ENCODE measurements at regions of chr13 and their contacts with region 1.

Region 1: DNA sequence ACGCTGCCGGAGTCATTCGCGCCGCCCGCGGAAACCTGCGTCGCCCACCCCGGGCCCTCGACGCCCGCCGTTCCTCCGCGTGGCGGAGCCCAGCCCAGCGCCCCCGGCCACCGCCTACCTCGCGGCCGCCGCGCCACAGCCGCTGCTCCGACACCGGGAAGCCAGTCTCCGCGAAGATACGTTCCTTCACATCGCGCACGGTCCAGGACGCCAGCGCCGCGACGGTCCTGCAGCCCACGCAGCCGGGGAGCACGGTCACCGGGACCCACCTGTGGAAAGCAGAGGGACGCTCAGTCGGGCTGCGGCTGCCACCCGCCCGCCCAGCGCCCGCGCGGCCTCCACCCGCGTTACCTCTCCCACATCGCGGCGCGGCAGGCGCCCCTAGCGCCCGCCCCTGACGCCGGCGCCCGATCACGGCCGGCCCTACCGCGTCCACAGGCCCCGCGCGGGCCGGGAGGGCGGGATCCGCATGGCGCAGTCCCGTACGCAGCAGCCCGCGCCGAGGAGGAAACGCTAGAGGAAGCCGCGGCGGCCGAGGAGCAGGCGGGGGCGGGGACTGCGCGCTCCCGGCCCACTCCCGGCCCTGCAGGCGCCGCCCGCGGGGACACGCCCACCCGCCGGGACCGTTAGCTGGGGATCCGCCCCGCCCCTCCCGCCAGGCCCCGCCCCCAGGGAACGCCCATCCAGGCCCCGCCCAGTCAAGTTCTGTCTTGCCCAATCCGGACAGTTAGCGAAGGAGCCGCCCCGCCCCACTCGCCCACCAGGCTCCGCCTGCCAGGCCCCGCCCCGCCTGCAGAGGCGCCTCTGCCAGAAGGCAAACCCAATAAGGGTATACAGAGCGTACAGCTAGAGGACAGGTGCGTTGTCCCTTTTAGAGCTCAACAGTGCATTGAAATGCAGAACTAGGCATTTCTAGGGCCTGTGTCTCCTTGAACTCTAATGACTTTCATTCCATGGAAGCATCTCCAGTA is 58.2 kb downstream of the SACS start:
- DNase-seq: peak; percentile 91 to 96 (median 95)
- H3K4me3 ChIP-seq: peak overlapping the region in 1 of 2 donors; percentile 58
- H3K4me3 Mint-ChIP-seq: peak overlapping the region; percentile 65 to 86 (median 84)
- H3K27ac ChIP-seq: peak overlapping the region; percentile 69
- H3K27ac Mint-ChIP-seq: peak overlapping the region; percentile 67 to 95 (median 87)
- H3K4me1 ChIP-seq: peaks cover 64% of the 10 kb centered on the region
- H3K4me1 Mint-ChIP-seq: peaks cover 45 to 78% (median 68%) of the 10 kb centered on the region in 4 donors
- H3K27me3 ChIP-seq: no peaks in the 10 kb centered on the region
- H3K27me3 Mint-ChIP-seq: no peaks in the 10 kb centered on the region

Region 2: DNA sequence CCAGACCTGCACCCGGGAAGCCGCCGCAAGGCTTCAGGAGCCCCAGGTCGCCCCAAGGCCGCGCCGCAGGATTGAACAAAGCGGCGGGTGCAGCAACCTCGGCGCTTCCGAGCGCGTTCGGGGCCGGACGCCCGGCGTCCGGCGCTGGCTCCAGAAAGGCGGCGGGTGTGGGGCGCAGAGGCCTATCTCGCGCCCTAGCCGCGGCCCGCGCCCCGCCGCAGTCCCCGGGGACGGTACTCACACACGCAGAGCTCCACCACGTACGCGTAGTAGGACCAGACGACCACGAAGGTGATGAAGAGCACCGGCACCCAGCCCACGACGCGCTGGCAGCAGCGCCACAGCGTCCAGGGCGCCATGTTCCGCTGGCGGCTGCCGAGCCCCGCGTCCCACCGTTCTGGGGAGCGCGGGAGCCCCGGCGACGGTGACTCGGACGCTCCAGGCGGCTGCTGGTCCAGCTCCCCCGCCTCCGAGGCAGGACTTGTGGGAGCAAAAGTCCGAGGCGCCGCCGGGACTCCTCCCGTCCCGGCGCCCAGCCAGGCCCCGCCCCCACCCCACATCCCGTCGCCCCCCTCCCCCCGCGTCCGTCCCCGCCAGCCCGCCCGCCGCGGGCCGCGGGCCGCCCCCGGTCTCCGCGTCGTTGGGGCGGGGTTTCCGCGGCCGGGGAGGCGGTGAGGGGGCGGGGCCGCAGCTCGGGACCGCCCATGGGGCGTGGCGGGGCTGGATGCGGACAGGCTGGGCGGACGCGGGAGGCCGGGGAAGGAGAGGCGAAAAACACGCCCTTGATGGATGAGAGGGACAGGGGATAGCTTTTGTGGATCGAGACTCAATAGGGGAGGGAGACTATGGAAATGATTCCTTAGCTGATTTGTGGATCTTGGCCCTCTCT is 1916.2 kb before region 1 on chr13 and contains the start of gene ZDHHC20:
- CTCF ChIA-PET with region 1: no interaction called
- POLR2A ChIA-PET with region 1: no interaction called
- intact Hi-C with region 1: loop called (anchors 5 kb)
- DNase-seq: peak; percentile 82 to 93 (median 86)
- H3K4me3 ChIP-seq: peak within 1 kb of the TSS; percentile 34 to 72
- H3K4me3 Mint-ChIP-seq: peak within 1 kb of the TSS; percentile 92 to 95 (median 94)
- H3K27ac ChIP-seq: peak within 1 kb of the TSS; percentile 86
- H3K27ac Mint-ChIP-seq: peak within 1 kb of the TSS; percentile 84 to 97 (median 94)
- H3K4me1 ChIP-seq: peaks cover 39% of the 10 kb centered on the region
- H3K4me1 Mint-ChIP-seq: peaks cover 30 to 56% (median 42%) of the 10 kb centered on the region in 4 donors
- H3K27me3 ChIP-seq: no peaks in the 10 kb centered on the region
- H3K27me3 Mint-ChIP-seq: no peaks in the 10 kb centered on the region
- total RNA-seq, gene ZDHHC20: 69.5 to 72.3 TPM

Region 3: DNA sequence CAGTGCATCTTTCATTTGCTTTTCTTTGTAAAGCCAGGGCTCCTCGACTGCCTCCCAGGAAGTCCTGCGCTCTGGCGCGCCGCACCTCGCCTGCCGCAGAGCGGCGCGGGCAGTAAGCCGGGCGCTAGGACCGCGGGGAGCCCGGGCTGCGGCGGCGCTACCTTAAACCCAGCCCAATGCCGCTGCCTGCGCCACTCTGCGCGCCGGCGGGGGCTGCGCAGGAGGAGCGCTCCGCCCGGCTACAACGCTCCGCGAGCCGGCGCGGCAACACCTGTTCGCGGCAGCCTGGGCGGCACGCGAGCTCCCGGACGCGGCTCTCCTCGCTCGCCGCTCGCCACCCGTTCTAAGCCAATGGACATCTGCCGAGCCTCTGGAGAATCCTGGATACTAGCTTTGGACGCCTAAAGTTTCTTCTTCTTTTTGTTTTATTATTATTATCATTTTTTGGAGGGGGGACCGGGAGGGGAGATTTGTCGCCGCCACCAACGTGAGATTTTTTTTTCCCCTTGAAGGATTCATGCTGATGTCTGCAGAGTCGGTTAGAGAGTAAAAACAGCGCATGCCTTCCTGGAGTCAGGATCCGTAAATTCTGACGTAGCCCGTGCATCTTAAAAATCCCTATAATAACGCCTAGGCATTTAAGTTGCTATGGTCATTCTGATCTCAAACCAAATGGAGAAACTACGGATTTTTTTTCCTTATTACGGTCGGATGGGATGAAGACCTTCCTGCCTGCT is 1704.2 kb before region 1 on chr13 and contains the start of gene FGF9:
- CTCF ChIA-PET with region 1: no interaction called
- POLR2A ChIA-PET with region 1: no interaction called
- intact Hi-C with region 1: loop called (anchors 5 kb)
- DNase-seq: peak; percentile 83 to 89 (median 87)
- H3K4me3 ChIP-seq: peak within 1 kb of the TSS; percentile 69 to 86
- H3K4me3 Mint-ChIP-seq: peak within 1 kb of the TSS; percentile 89 to 98 (median 92)
- H3K27ac ChIP-seq: peak within 1 kb of the TSS; percentile 19
- H3K27ac Mint-ChIP-seq: peak within 1 kb of the TSS; percentile 65 to 93 (median 89)
- H3K4me1 ChIP-seq: peaks cover 45% of the 10 kb centered on the region
- H3K4me1 Mint-ChIP-seq: peaks cover 30 to 58% (median 40%) of the 10 kb centered on the region in 4 donors
- H3K27me3 ChIP-seq: peaks cover 11% of the 10 kb centered on the region
- H3K27me3 Mint-ChIP-seq: peaks cover 6 to 7% of the 10 kb centered on the region in 2 donors
- total RNA-seq, gene FGF9: 6.5 to 7.3 TPM

Region 4: GRCh38 chr13:23579072-23579895 is 204.0 kb after region 1 on chr13:
- CTCF ChIA-PET with region 1: no interaction called
- POLR2A ChIA-PET with region 1: no interaction called
- intact Hi-C with region 1: loop called (anchors 1 kb)
- DNase-seq: peak; percentile 83 to 89 (median 87)
- H3K4me3 ChIP-seq: peak overlapping the region; percentile 23 to 69
- H3K4me3 Mint-ChIP-seq: peak overlapping the region; percentile 75 to 85 (median 82)
- H3K27ac ChIP-seq: peak overlapping the region; percentile 48
- H3K27ac Mint-ChIP-seq: peak overlapping the region in 5 of 7 donors; percentile 55 to 87 (median 81)
- H3K4me1 ChIP-seq: peaks cover 17% of the 10 kb centered on the region
- H3K4me1 Mint-ChIP-seq: peaks cover 12 to 20% (median 16%) of the 10 kb centered on the region in 4 donors
- H3K27me3 ChIP-seq: peaks cover 13% of the 10 kb centered on the region
- H3K27me3 Mint-ChIP-seq: peaks cover 31% of the 10 kb centered on the region in 2 donors

Region 5: DNA sequence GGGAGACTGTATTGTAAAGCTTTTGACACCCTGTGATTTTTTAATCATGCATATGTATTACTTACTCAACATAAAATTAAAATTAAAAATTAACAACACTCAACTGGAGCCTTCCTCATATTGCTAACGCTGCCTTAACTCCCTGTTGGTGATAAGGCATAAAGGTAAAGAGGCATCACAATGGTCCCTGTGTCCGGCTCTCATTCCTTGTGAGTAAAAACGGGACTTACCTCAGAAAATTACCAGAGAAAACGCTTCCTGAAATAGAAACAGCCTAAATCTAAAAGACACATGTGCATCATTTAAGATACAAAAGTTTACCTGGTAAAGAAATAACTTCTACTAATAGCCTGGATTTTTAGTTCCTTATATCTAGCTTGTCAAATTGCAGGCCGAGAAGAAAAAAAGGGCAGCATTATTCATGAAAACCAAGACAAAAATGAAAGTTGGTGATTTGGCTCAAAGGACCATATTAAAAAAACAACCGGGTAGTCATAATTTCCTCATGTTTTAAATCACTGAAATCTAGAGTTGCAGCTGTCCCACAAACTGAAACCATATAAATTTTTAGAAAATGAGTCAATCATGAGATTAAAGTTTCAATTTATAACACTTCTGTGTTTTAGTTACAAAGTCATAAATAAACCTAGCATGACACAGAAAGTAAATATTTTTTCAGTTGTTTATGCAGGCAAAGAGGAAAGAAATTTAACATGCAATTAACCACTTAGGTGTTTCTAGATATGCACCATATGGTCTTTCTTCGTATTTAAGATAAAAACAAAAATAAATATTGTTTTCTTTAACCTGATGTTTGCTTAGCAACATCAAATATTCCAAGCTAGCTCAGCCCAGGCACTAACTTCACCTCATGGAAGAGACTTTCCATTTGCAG is 419.2 kb after region 1 on chr13:
- CTCF ChIA-PET with region 1: no interaction called
- POLR2A ChIA-PET with region 1: no interaction called
- intact Hi-C with region 1: no loop called
- DNase-seq: no peak
- H3K4me3 ChIP-seq: no peak overlapping the region
- H3K4me3 Mint-ChIP-seq: peak overlapping the region in 6 of 8 donors; percentile 7 to 57 (median 27)
- H3K27ac ChIP-seq: no peak overlapping the region
- H3K27ac Mint-ChIP-seq: peak overlapping the region in 3 of 7 donors; percentile 6 to 44 (median 37)
- H3K4me1 ChIP-seq: peaks cover under 1% of the 10 kb centered on the region
- H3K4me1 Mint-ChIP-seq: peaks cover 7 to 25% (median 10%) of the 10 kb centered on the region in 4 donors
- H3K27me3 ChIP-seq: no peaks in the 10 kb centered on the region
- H3K27me3 Mint-ChIP-seq: no peaks in the 10 kb centered on the region

Region 6: GRCh38 chr13:24160454-24161009 is 785.2 kb after region 1 on chr13 and contains the start of gene SPATA13:
- CTCF ChIA-PET with region 1: no interaction called
- POLR2A ChIA-PET with region 1: no interaction called
- intact Hi-C with region 1: loop called (anchors 2 kb)
- DNase-seq: peak; percentile 88 to 90 (median 88)
- H3K4me3 ChIP-seq: peak within 1 kb of the TSS; percentile 69
- H3K4me3 Mint-ChIP-seq: peak within 1 kb of the TSS; percentile 78 to 90 (median 86)
- H3K27ac ChIP-seq: peak within 1 kb of the TSS; percentile 19
- H3K27ac Mint-ChIP-seq: peak within 1 kb of the TSS in 5 of 7 donors; percentile 32 to 83 (median 72)
- H3K4me1 ChIP-seq: peaks cover 19% of the 10 kb centered on the region
- H3K4me1 Mint-ChIP-seq: peaks cover 9 to 16% (median 12%) of the 10 kb centered on the region in 4 donors
- H3K27me3 ChIP-seq: no peaks in the 10 kb centered on the region
- H3K27me3 Mint-ChIP-seq: peaks cover 0 to 2% of the 10 kb centered on the region in 2 donors
- total RNA-seq, gene SPATA13: 107 to 110 TPM

Region 7: DNA sequence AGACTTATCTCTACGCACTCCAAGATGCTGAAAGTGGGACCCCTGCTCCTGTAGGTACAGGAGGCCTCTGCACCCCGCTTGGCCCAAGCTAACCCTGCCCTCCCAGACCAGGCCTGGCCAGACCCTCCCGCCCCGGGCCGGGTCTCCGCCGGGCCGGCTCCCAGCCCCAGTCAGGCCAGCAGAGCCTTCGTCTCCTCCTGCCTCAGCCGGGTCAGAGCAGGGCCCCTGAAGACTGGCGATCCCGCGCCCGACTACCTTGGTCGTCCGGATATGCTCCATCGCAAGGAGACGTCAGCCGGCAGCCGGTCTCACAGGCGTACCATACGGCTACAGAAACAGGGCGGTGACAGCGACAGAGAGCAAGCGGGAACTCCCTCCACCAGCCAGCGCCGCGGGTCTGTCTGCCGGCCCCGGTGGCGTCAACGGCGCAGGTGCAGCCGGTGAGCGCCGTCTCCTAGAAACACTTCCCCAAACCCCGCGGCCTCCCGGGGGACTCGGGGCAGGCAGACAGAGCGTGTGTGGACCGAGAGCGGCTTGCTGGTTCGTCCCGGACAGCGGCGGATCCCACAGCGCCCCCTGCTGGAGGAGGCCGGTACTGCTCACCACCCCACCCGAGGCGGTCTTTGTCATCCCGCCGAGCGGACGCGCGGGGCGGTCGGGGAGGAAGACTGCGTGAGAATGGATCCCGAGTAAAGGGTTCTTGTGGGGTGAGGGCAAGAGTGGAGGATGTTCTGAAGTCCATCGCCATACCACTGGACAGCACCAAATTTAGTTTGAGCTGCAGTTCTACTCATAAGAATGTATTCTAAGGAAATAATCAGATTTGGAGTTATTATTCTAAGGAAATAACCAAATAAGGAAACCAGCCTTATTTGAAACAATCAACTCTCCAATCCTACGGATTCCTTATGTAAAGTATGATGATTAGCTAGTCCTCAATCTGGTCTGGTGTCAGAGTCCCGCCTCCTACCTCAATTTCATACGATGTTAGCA is 1912.0 kb after region 1 on chr13 and contains the start of gene MTMR6:
- CTCF ChIA-PET with region 1: no interaction called
- POLR2A ChIA-PET with region 1: no interaction called
- intact Hi-C with region 1: loop called (anchors 5 kb)
- DNase-seq: peak; percentile 92 to 96 (median 94)
- H3K4me3 ChIP-seq: peak within 1 kb of the TSS; percentile 91 to 92
- H3K4me3 Mint-ChIP-seq: peak within 1 kb of the TSS; percentile 94 to 100 (median 98)
- H3K27ac ChIP-seq: peak within 1 kb of the TSS; percentile 100
- H3K27ac Mint-ChIP-seq: peak within 1 kb of the TSS; percentile 97 to 100 (median 98)
- H3K4me1 ChIP-seq: peaks cover 40% of the 10 kb centered on the region
- H3K4me1 Mint-ChIP-seq: peaks cover 36 to 58% (median 46%) of the 10 kb centered on the region in 4 donors
- H3K27me3 ChIP-seq: no peaks in the 10 kb centered on the region
- H3K27me3 Mint-ChIP-seq: peaks cover 4 to 8% of the 10 kb centered on the region in 2 donors
- total RNA-seq, gene MTMR6: 18.9 to 19.1 TPM